ENCODE measurements at regions of chr9 and their contacts with region 1.

Region 1: GRCh38 chr9:100074093-100074492 is 24.7 kb downstream of the ERP44 start:
- DNase-seq: no peak
- ATAC-seq: no peak
- H3K4me3 ChIP-seq: no peak overlapping the region
- H3K27ac ChIP-seq: no peak overlapping the region
- H3K4me1 ChIP-seq: peaks cover 9% of the 10 kb centered on the region
- H3K27me3 ChIP-seq: no peaks in the 10 kb centered on the region
- CTCF ChIP-seq: no peak

Region 2: GRCh38 chr9:100038472-100038871 is 35.6 kb before region 1 on chr9:
- intact Hi-C with region 1: loop called in 1 of 2 experiments (anchors 5 kb)
- DNase-seq: no peak
- ATAC-seq: no peak
- H3K4me3 ChIP-seq: no peak overlapping the region
- H3K27ac ChIP-seq: no peak overlapping the region
- H3K4me1 ChIP-seq: peaks cover 3% of the 10 kb centered on the region
- H3K27me3 ChIP-seq: no peaks in the 10 kb centered on the region
- CTCF ChIP-seq: no peak

Measured in psoas muscle (tissue), 8 donors.